ENCODE measurements at regions of chr14 and their contacts with region 1.

Region 1: GRCh38 chr14:50778721-50779483 is 52.1 kb downstream of the NIN start:
- DNase-seq: no peak
- ATAC-seq: no peak
- H3K4me3 ChIP-seq: no peak overlapping the region
- H3K4me3 Mint-ChIP-seq: no peak overlapping the region
- H3K27ac ChIP-seq: no peak overlapping the region
- H3K27ac Mint-ChIP-seq: peak overlapping the region; percentile 62
- H3K4me1 ChIP-seq: peaks cover 18 to 20% of the 10 kb centered on the region in 2 donors
- H3K4me1 Mint-ChIP-seq: peaks cover 24% of the 10 kb centered on the region
- H3K27me3 ChIP-seq: no peaks in the 10 kb centered on the region
- H3K27me3 Mint-ChIP-seq: no peaks in the 10 kb centered on the region
- CTCF ChIP-seq: no peak

Region 2: DNA sequence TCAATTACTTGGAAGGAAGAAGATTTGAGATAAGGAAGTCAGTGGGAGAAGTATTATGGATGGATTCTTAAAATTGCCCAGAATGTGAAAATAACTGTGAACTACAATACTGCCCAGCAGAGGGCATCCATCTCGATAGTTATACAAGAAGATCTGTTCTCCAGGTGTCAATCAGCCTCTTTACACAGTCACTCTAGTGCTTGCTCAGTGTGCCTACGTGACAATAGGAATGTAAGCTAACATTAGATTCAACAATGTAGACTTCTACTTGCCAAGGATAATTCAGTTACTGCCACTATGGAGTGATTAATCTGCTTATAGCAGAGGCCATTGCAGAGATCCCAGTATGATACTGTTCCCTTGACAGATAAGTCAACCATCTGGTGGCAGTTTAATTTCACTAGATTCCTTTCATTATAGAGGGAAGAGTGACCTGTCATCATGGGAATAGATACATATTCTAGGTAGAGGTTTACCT is 235.9 kb before region 1 on chr14:
- CTCF ChIA-PET with region 1: interaction called, 15 read pairs
- POLR2A ChIA-PET with region 1: no interaction called
- intact Hi-C with region 1: loop called (anchors 1 kb)
- DNase-seq: peak; percentile 65
- ATAC-seq: peak; percentile 58
- H3K4me3 ChIP-seq: no peak overlapping the region
- H3K4me3 Mint-ChIP-seq: no peak overlapping the region
- H3K27ac ChIP-seq: no peak overlapping the region
- H3K27ac Mint-ChIP-seq: no peak overlapping the region
- H3K4me1 ChIP-seq: no peaks in the 10 kb centered on the region
- H3K4me1 Mint-ChIP-seq: peaks cover 8% of the 10 kb centered on the region
- H3K27me3 ChIP-seq: no peaks in the 10 kb centered on the region
- H3K27me3 Mint-ChIP-seq: no peaks in the 10 kb centered on the region
- CTCF ChIP-seq: peak; percentile 76

Region 3: GRCh38 chr14:50619556-50620141 is 159.3 kb before region 1 on chr14:
- CTCF ChIA-PET with region 1: interaction called, 31 read pairs
- POLR2A ChIA-PET with region 1: no interaction called
- intact Hi-C with region 1: loop called (anchors 1 kb)
- DNase-seq: peak; percentile 56
- ATAC-seq: no peak
- H3K4me3 ChIP-seq: no peak overlapping the region
- H3K4me3 Mint-ChIP-seq: no peak overlapping the region
- H3K27ac ChIP-seq: no peak overlapping the region
- H3K27ac Mint-ChIP-seq: no peak overlapping the region
- H3K4me1 ChIP-seq: no peaks in the 10 kb centered on the region
- H3K4me1 Mint-ChIP-seq: peaks cover 5% of the 10 kb centered on the region
- H3K27me3 ChIP-seq: no peaks in the 10 kb centered on the region
- H3K27me3 Mint-ChIP-seq: no peaks in the 10 kb centered on the region
- CTCF ChIP-seq: peak; percentile 73

Region 4: GRCh38 chr14:50768680-50769079 is 10.2 kb before region 1 on chr14:
- CTCF ChIA-PET with region 1: interaction called, 165 read pairs
- POLR2A ChIA-PET with region 1: no interaction called
- intact Hi-C with region 1: no loop called
- DNase-seq: no peak
- ATAC-seq: no peak
- H3K4me3 ChIP-seq: no peak overlapping the region
- H3K4me3 Mint-ChIP-seq: no peak overlapping the region
- H3K27ac ChIP-seq: no peak overlapping the region
- H3K27ac Mint-ChIP-seq: peak overlapping the region; percentile 15
- H3K4me1 ChIP-seq: no peaks in the 10 kb centered on the region
- H3K4me1 Mint-ChIP-seq: peaks cover 1% of the 10 kb centered on the region
- H3K27me3 ChIP-seq: no peaks in the 10 kb centered on the region
- H3K27me3 Mint-ChIP-seq: no peaks in the 10 kb centered on the region
- CTCF ChIP-seq: no peak

Region 5: DNA sequence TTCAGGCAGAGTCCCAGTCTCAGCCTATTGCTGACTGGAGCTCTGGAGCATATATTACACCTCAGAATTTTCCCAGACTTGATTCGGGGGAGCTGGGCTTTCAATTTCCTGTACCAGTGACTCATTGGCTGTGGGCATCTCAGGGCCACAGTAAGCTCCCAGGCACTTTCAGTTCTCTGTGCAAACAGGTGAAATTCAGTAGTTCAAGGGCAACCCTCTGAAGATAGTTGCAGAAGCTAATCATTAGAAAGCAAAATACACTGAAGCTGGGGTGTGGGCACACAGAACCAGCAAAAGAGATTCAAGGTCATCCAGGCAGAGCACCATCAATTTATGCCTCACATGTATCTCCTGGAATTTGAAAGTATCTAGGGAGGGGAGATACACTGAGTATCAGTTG is 60.1 kb after region 1 on chr14:
- CTCF ChIA-PET with region 1: interaction called, 12 read pairs
- POLR2A ChIA-PET with region 1: no interaction called
- intact Hi-C with region 1: no loop called
- DNase-seq: no peak
- ATAC-seq: no peak
- H3K4me3 ChIP-seq: no peak overlapping the region
- H3K4me3 Mint-ChIP-seq: no peak overlapping the region
- H3K27ac ChIP-seq: no peak overlapping the region
- H3K27ac Mint-ChIP-seq: no peak overlapping the region
- H3K4me1 ChIP-seq: peaks cover 27 to 28% of the 10 kb centered on the region in 2 donors
- H3K4me1 Mint-ChIP-seq: peaks cover 40% of the 10 kb centered on the region
- H3K27me3 ChIP-seq: no peaks in the 10 kb centered on the region
- H3K27me3 Mint-ChIP-seq: no peaks in the 10 kb centered on the region
- CTCF ChIP-seq: no peak

Measured in B cell (primary cell).